MCF 10A (cell line): ENCODE measurements at regions of chr11 and their contacts with region 1.

Region 1: GRCh38 chr11:10899121-10899830 is 41.4 kb upstream of the ZBED5 start:
- DNase-seq: peak; percentile 96
- H3K4me3 Mint-ChIP-seq: peak overlapping the region; percentile 58
- H3K27ac Mint-ChIP-seq: peak overlapping the region; percentile 98
- H3K4me1 Mint-ChIP-seq: peaks cover 62% of the 10 kb centered on the region
- H3K27me3 Mint-ChIP-seq: no peaks in the 10 kb centered on the region
- CTCF ChIP-seq: no peak

Region 2: DNA sequence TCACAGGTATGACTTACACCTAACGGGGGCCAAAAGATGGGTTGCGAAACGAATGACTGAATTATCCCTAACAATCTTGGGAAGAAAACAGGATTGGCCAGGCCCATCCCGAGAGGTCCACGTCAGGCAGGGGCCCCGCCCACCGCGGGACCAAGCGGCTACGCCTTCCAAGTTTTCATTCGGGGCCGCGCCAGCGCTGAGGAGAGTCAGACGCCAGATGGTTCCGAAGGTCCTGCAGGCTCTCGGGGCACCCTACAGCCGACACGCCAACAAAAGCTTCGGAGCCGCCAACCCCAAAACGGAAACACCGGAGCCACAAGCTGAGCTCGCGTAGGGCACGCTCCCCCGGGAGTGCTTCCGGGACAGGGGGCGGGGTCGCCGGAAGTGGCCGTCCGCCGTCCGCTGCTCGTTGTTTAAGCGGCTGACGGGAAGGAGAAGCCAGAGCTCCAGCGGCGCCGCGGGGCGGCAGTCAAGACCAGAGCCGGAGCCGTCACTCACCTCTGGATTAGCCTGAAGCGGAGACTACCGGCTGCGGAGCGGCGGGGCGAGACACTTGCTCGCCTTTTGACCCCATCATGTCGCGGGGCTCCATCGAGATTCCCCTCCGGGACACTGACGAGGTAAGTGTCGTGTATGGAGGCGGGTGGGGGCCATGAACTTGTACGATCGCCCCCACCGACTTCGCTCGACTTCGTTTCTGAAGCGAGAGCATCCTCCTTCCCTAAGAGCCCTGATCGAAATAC is 148.3 kb before region 1 on chr11 and contains the start of gene CTR9:
- CTCF ChIA-PET with region 1: no interaction called
- POLR2A ChIA-PET with region 1: interaction called, 10 read pairs
- intact Hi-C with region 1: no loop called
- DNase-seq: peak; percentile 91
- H3K4me3 Mint-ChIP-seq: peak within 1 kb of the TSS; percentile 95
- H3K27ac Mint-ChIP-seq: peak within 1 kb of the TSS; percentile 97
- H3K4me1 Mint-ChIP-seq: peaks cover 6% of the 10 kb centered on the region
- H3K27me3 Mint-ChIP-seq: no peaks in the 10 kb centered on the region
- CTCF ChIP-seq: no peak
- total RNA-seq, gene CTR9: 25.8 and 28.8 TPM in 2 replicates

Region 3: GRCh38 chr11:10784232-10785145 is 114.8 kb before region 1 on chr11:
- CTCF ChIA-PET with region 1: no interaction called
- POLR2A ChIA-PET with region 1: no interaction called
- intact Hi-C with region 1: no loop called
- DNase-seq: no peak
- H3K4me3 Mint-ChIP-seq: no peak overlapping the region
- H3K27ac Mint-ChIP-seq: no peak overlapping the region
- H3K4me1 Mint-ChIP-seq: no peaks in the 10 kb centered on the region
- H3K27me3 Mint-ChIP-seq: no peaks in the 10 kb centered on the region
- CTCF ChIP-seq: no peak

Region 4: DNA sequence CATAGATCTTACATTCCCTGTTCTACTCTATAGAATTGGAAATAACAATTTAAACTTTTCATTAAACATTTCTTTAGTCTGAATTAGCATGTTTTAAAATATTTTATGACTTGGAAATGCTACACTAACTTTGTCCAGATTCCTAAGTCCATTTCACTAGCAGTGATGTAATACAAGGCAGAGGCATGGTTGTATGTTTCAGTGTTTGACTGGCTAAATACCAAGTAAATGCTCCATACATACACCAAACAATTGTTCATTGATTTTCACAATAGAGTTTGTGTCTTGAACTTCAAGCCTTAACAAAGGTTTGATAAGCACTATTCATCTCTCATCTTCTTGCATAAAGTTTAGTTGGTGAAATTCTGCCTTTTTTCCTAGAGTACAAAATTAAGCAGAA is 54.9 kb before region 1 on chr11:
- CTCF ChIA-PET with region 1: no interaction called
- POLR2A ChIA-PET with region 1: interaction called, 18 read pairs
- intact Hi-C with region 1: no loop called
- DNase-seq: no peak
- H3K4me3 Mint-ChIP-seq: no peak overlapping the region
- H3K27ac Mint-ChIP-seq: no peak overlapping the region
- H3K4me1 Mint-ChIP-seq: no peaks in the 10 kb centered on the region
- H3K27me3 Mint-ChIP-seq: no peaks in the 10 kb centered on the region
- CTCF ChIP-seq: no peak

Region 5: GRCh38 chr11:10878408-10879214 is 20.7 kb before region 1 on chr11:
- CTCF ChIA-PET with region 1: interaction called, 15 read pairs
- POLR2A ChIA-PET with region 1: interaction called, 43 read pairs
- intact Hi-C with region 1: no loop called
- DNase-seq: peak; percentile 73
- H3K4me3 Mint-ChIP-seq: no peak overlapping the region
- H3K27ac Mint-ChIP-seq: no peak overlapping the region
- H3K4me1 Mint-ChIP-seq: peaks cover 26% of the 10 kb centered on the region
- H3K27me3 Mint-ChIP-seq: no peaks in the 10 kb centered on the region
- CTCF ChIP-seq: peak; percentile 57

Region 6: DNA sequence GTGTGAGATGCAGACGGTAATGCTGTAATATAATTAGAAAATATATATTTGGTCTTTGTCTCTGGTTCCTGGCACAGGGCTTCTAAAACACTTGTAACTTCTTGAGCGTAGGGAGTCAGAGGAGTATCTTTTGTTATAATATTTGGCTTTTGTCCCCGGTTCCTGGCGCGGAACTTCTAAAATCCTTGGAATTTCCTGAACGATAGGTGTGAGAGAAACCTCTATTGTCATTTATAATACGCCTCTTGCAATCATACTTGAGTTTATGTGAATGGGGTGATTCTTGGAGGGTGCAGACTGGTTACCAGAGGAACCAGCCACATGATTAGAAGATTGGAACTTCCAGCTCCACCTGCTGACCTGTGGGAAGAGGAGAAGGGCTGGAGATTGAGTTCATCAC is 12.6 kb after region 1 on chr11:
- CTCF ChIA-PET with region 1: interaction called, 10 read pairs
- POLR2A ChIA-PET with region 1: interaction called, 30 read pairs
- intact Hi-C with region 1: no loop called
- DNase-seq: no peak
- H3K4me3 Mint-ChIP-seq: no peak overlapping the region
- H3K27ac Mint-ChIP-seq: no peak overlapping the region
- H3K4me1 Mint-ChIP-seq: peaks cover 26% of the 10 kb centered on the region
- H3K27me3 Mint-ChIP-seq: no peaks in the 10 kb centered on the region
- CTCF ChIP-seq: no peak

Region 7: GRCh38 chr11:11717064-11717725 is 817.9 kb after region 1 on chr11:
- CTCF ChIA-PET with region 1: no interaction called
- POLR2A ChIA-PET with region 1: interaction called, 10 read pairs
- intact Hi-C with region 1: no loop called
- DNase-seq: peak; percentile 97
- H3K4me3 Mint-ChIP-seq: peak overlapping the region; percentile 63
- H3K27ac Mint-ChIP-seq: peak overlapping the region; percentile 89
- H3K4me1 Mint-ChIP-seq: peaks cover 12% of the 10 kb centered on the region
- H3K27me3 Mint-ChIP-seq: no peaks in the 10 kb centered on the region
- CTCF ChIP-seq: no peak